Adrenal gland (tissue), 19 donors: ENCODE measurements at regions of chr6 and their contacts with region 1.

Region 1: DNA sequence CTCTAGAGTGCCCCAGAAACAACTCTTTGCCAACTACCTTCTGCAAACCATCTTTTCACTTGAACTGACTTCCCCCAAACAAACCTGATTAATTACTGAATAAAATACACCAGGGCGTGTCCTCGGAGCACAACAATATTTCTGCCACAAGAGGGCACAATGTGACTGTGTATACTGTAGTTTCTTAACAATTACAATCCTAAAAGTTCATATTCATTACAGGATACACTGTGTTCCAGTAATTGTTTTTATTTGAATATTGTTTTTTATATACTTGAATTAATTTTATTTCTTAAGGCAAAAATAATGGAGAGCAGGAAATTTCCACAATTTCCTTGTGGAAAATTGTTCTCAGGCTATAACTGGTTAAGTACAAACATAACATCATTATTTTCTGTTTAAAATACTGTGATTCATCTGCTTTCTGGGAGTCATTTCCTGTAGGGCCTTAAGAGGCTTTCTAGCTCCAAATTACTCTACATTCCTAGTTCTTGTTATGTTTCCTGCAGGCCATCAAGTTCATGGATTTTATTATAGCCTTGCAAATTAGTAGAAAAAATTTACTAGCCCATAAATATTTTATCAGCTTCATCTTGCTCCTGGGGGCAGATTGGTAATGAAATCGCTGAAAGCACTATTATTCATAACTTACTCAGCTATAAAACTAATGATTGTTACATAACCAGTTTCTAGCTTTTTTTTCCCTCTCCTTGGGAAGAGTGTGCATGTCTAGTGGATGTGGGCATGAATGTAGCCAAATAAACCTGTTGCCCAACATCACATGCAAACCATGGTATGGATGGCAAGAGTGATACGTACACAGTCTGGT is 51.9 kb upstream of the SLC22A16 start:
- DNase-seq: peak; percentile 33 to 78 (median 60)
- H3K4me3 ChIP-seq: no peak overlapping the region
- H3K27ac ChIP-seq: peak overlapping the region in 3 of 5 donors; percentile 14 to 33 (median 21)
- H3K4me1 ChIP-seq: peaks cover 6 to 9% of the 10 kb centered on the region in 2 donors
- H3K27me3 ChIP-seq: no peaks in the 10 kb centered on the region
- CTCF ChIP-seq: peak; percentile 68 to 94 (median 84)
- POLR2A ChIP-seq: no peak

Region 2: GRCh38 chr6:110682460-110682853 is 154.1 kb after region 1 on chr6:
- intact Hi-C with region 1: loop called in 1 of 2 experiments (anchors 10 kb)
- DNase-seq: peak; percentile 54 to 85 (median 83)
- H3K4me3 ChIP-seq: no peak overlapping the region
- H3K27ac ChIP-seq: peak overlapping the region in 2 of 5 donors; percentile 29 to 53
- H3K4me1 ChIP-seq: peaks cover 8 to 18% of the 10 kb centered on the region in 2 donors
- H3K27me3 ChIP-seq: no peaks in the 10 kb centered on the region
- CTCF ChIP-seq: peak; percentile 52 to 92 (median 80)
- POLR2A ChIP-seq: no peak

Region 3: DNA sequence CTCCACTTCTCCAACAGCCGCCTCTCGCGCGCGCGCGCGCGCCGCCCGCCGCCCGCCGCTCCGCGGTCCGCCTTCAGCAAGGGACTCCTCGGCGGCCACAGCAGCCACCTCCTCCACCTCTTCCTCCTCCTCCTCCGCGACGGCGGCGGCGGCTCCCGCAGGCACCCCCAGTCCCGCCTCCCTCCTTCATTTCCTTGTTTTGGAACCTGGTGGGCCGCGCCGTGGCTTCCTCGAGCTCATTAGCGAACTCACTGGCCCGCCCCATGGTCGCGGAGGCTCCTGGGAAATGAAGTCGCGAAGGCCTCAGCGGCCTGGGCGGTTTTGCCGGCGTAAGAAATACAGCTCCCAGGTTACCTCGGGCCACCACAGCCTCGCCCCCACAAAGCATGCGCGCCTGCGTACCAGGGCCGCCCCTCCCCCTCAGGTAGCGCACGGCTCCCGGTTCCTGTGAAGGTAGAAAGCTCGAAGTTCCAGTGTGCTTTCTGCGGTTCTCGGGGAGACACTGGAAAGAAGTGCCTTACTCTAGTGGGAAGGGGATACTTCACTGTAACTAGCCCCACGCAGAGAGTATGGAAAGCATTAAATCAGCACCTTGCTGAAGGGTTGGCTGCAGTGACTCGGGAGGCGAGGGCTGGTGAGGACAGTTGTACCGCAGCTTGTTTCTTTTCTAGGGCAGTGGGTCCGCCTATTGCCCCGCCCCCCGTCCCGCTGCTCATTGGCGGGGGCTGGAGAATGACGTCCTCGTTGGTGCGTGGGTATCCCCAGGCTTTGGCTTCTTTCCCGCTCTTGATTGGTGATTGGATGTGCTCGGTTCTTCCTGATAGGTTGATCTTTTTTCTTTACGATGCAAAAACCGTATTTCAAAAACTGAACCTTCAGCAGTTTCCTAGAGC is 287.1 kb after region 1 on chr6 and contains the start of gene CDK19:
- intact Hi-C with region 1: no loop called
- DNase-seq: peak; percentile 97 to 99 (median 99)
- H3K4me3 ChIP-seq: peak within 1 kb of the TSS; percentile 8 to 81 (median 72)
- H3K27ac ChIP-seq: peak within 1 kb of the TSS; percentile 80 to 95 (median 92)
- H3K4me1 ChIP-seq: peaks cover 8 to 30% of the 10 kb centered on the region in 2 donors
- H3K27me3 ChIP-seq: no peaks in the 10 kb centered on the region
- CTCF ChIP-seq: no peak
- POLR2A ChIP-seq: peak; percentile 56 to 95
- total RNA-seq, gene CDK19: 5.4 to 59.1 (median 8.2) TPM

Region 4: GRCh38 chr6:110944681-110945151 is 416.4 kb after region 1 on chr6:
- intact Hi-C with region 1: loop called in 1 of 2 experiments (anchors 5 kb)
- DNase-seq: no peak
- H3K4me3 ChIP-seq: no peak overlapping the region
- H3K27ac ChIP-seq: no peak overlapping the region
- H3K4me1 ChIP-seq: no peaks in the 10 kb centered on the region
- H3K27me3 ChIP-seq: no peaks in the 10 kb centered on the region
- CTCF ChIP-seq: no peak
- POLR2A ChIP-seq: no peak

Region 5: GRCh38 chr6:110999634-111000270 is 471.4 kb after region 1 on chr6:
- intact Hi-C with region 1: loop called in 1 of 2 experiments (anchors 10 kb)
- DNase-seq: no peak
- H3K4me3 ChIP-seq: no peak overlapping the region
- H3K27ac ChIP-seq: no peak overlapping the region
- H3K4me1 ChIP-seq: no peaks in the 10 kb centered on the region
- H3K27me3 ChIP-seq: no peaks in the 10 kb centered on the region
- CTCF ChIP-seq: peak; percentile 26 to 62 (median 48)
- POLR2A ChIP-seq: no peak